ENCODE measurements at regions of chr4 and their contacts with region 1.

Region 1: GRCh38 chr4:153211986-153212729 is 7.9 kb downstream of the TRIM2 start:
- DNase-seq: no peak

Region 2: GRCh38 chr4:152910521-152910920 is 301.6 kb before region 1 on chr4:
- intact Hi-C with region 1: no loop called
- DNase-seq: no peak

Region 3: DNA sequence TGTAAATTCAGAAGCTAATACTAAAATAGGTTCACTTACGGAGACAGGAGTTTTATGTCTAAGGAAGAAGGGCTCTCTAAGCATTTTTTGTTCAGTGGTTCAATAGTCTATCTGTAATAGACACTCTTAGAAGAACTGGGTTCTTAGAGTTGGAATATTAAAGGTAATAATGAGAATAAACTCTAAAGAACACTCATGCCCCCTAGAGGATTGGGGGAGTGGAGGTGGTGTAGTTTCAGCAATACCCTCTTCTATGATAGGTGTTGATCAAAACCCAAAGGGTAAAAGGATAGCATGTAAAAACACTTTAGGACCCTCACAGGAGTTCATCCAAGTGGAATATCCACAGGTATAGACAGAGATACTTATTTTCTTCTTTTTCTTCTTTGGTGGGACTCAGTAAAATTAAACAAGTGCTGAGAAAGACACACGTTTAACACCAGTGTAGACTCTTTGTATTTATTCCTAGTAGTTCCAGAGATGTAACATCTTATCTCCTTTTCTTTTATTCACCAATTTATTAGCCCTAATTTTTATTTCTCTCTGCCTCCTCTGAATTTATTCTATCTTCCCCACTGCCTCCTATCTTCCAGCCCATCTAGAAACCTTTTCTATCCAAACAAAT is 106.7 kb after region 1 on chr4:
- intact Hi-C with region 1: loop called (anchors 5 kb)
- DNase-seq: no peak